ENCODE measurements at regions of chr17 and their contacts with region 1.

Region 1: GRCh38 chr17:50425682-50426471 is at the start of gene ACSF2:
- DNase-seq: peak; percentile 92 to 93
- H3K4me3 ChIP-seq: peak within 1 kb of the TSS; percentile 74
- H3K4me3 Mint-ChIP-seq: peak within 1 kb of the TSS; percentile 80
- H3K27ac Mint-ChIP-seq: peak within 1 kb of the TSS; percentile 54
- H3K4me1 ChIP-seq: peaks cover 64% of the 10 kb centered on the region
- H3K4me1 Mint-ChIP-seq: peaks cover 60% of the 10 kb centered on the region
- H3K27me3 ChIP-seq: no peaks in the 10 kb centered on the region
- H3K27me3 Mint-ChIP-seq: no peaks in the 10 kb centered on the region
- CTCF ChIP-seq: peak in 1 of 2 experiments; percentile 35
- total RNA-seq, gene ACSF2: 135 and 161 TPM in 2 replicates

Region 2: DNA sequence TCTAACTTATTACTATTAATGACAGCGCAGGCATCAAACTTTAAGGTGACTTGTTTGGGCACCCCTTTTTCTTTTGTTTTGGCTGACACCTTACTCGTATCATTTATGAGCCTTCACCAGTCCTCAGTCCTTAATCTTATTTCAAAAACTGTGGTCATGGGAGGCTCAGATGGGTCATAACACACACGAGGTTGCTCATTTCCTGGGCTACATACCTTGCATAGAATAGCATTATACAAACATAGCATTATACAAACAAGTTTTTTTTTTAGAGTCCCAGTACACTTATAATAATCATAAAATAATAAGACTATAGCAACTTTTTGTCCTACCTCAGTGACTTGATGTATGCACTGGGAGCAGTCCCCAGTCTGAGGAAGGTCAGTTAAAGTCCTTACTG is 11.1 kb before region 1 on chr17:
- CTCF ChIA-PET with region 1: no interaction called
- POLR2A ChIA-PET with region 1: no interaction called
- intact Hi-C with region 1: no loop called
- DNase-seq: no peak
- H3K4me3 ChIP-seq: no peak overlapping the region
- H3K4me3 Mint-ChIP-seq: no peak overlapping the region
- H3K27ac Mint-ChIP-seq: no peak overlapping the region
- H3K4me1 ChIP-seq: no peaks in the 10 kb centered on the region
- H3K4me1 Mint-ChIP-seq: no peaks in the 10 kb centered on the region
- H3K27me3 ChIP-seq: no peaks in the 10 kb centered on the region
- H3K27me3 Mint-ChIP-seq: peaks cover 7% of the 10 kb centered on the region
- CTCF ChIP-seq: no peak

Region 3: DNA sequence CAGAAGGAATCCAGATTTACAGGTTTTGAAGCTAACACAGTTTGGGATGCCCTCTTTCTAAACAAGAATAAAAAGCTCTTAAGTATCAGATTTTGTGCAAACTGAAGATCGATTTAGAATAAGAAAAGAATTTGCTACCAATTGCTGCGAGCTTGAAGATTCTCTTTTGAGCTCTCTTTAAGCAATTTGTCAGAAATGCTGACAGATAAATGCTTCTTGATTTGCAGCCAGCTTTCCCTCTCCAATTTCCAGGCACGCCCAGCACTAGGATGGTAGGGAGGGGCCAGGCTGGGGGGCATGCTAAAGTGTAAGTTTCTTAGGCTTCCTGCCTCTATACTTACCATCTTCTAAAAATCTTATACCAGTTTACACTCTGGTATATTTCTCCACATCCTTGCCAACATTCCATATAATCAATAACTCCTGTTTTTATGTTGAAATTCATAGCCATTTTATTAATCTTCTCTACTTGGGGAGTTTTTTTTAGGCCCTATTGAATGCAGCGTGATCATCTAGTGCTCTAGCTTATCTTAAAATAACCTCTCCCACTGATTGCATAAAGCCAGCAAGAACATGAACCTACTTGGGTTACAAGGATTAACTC is 17.6 kb after region 1 on chr17:
- CTCF ChIA-PET with region 1: interaction called, 19 read pairs
- POLR2A ChIA-PET with region 1: interaction called, 6 read pairs
- intact Hi-C with region 1: loop called (anchors 1 kb)
- DNase-seq: peak; percentile 71 to 77
- H3K4me3 ChIP-seq: no peak overlapping the region
- H3K4me3 Mint-ChIP-seq: peak overlapping the region; percentile 43
- H3K27ac Mint-ChIP-seq: peak overlapping the region; percentile 74
- H3K4me1 ChIP-seq: peaks cover 66% of the 10 kb centered on the region
- H3K4me1 Mint-ChIP-seq: peaks cover 69% of the 10 kb centered on the region
- H3K27me3 ChIP-seq: no peaks in the 10 kb centered on the region
- H3K27me3 Mint-ChIP-seq: no peaks in the 10 kb centered on the region
- CTCF ChIP-seq: no peak

Region 4: GRCh38 chr17:50541716-50542688 is 116.1 kb after region 1 on chr17:
- CTCF ChIA-PET with region 1: no interaction called
- POLR2A ChIA-PET with region 1: no interaction called
- intact Hi-C with region 1: no loop called
- DNase-seq: peak; percentile 94 to 100
- H3K4me3 ChIP-seq: peak overlapping the region; percentile 45
- H3K4me3 Mint-ChIP-seq: peak overlapping the region; percentile 77
- H3K27ac Mint-ChIP-seq: peak overlapping the region; percentile 39
- H3K4me1 ChIP-seq: peaks cover 66% of the 10 kb centered on the region
- H3K4me1 Mint-ChIP-seq: peaks cover 69% of the 10 kb centered on the region
- H3K27me3 ChIP-seq: no peaks in the 10 kb centered on the region
- H3K27me3 Mint-ChIP-seq: no peaks in the 10 kb centered on the region
- CTCF ChIP-seq: peak; percentile 41 to 57

Region 5: DNA sequence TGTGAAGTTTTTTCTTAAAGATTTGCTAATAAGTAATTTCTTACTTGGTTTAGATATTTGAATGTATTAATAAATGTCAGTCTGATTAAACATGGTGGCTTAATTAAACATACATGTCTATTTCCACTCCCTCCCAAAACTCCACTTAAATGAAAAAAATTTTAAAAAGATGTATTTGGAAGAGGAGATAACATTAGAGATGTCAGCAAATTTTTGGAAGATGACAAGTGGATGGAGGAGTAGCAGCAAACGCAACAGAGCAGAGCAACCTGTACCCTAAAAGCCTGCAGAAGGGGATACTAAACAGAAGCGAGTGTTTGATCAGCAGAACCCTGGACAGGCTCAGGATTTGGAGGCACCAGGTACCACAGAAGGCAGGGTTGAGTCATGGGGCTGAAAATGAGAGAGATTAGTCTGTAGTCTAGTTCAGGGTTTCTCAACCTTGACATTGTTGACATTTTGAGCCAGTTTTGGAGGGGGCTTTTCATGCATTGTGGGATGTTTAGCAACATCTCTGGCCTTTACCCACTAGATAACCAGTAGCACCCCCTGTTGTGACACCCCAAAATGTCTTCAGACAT is 311.3 kb after region 1 on chr17:
- CTCF ChIA-PET with region 1: no interaction called
- POLR2A ChIA-PET with region 1: interaction called, 10 read pairs
- intact Hi-C with region 1: no loop called
- DNase-seq: no peak
- H3K4me3 ChIP-seq: no peak overlapping the region
- H3K4me3 Mint-ChIP-seq: no peak overlapping the region
- H3K27ac Mint-ChIP-seq: peak overlapping the region; percentile 17
- H3K4me1 ChIP-seq: no peaks in the 10 kb centered on the region; the same call in 1 of the 2 replicates
- H3K4me1 Mint-ChIP-seq: peaks cover 11% of the 10 kb centered on the region
- H3K27me3 ChIP-seq: no peaks in the 10 kb centered on the region
- H3K27me3 Mint-ChIP-seq: no peaks in the 10 kb centered on the region
- CTCF ChIP-seq: no peak